CD4-positive, alpha-beta memory T cell (primary cell): ENCODE measurements at regions of chr1 and their contacts with region 1.

Region 1: GRCh38 chr1:101247404-101248287 is 10.8 kb downstream of the S1PR1 start:
- DNase-seq: no peak
- H3K4me3 ChIP-seq: no peak overlapping the region
- H3K4me3 Mint-ChIP-seq: peak overlapping the region in 3 of 8 donors; percentile 4 to 46 (median 36)
- H3K27ac ChIP-seq: no peak overlapping the region
- H3K27ac Mint-ChIP-seq: peak overlapping the region; percentile 20 to 79 (median 65)
- H3K4me1 ChIP-seq: peaks cover 55% of the 10 kb centered on the region
- H3K4me1 Mint-ChIP-seq: peaks cover 38 to 77% (median 57%) of the 10 kb centered on the region in 4 donors
- H3K27me3 ChIP-seq: no peaks in the 10 kb centered on the region
- H3K27me3 Mint-ChIP-seq: no peaks in the 10 kb centered on the region

Region 2: DNA sequence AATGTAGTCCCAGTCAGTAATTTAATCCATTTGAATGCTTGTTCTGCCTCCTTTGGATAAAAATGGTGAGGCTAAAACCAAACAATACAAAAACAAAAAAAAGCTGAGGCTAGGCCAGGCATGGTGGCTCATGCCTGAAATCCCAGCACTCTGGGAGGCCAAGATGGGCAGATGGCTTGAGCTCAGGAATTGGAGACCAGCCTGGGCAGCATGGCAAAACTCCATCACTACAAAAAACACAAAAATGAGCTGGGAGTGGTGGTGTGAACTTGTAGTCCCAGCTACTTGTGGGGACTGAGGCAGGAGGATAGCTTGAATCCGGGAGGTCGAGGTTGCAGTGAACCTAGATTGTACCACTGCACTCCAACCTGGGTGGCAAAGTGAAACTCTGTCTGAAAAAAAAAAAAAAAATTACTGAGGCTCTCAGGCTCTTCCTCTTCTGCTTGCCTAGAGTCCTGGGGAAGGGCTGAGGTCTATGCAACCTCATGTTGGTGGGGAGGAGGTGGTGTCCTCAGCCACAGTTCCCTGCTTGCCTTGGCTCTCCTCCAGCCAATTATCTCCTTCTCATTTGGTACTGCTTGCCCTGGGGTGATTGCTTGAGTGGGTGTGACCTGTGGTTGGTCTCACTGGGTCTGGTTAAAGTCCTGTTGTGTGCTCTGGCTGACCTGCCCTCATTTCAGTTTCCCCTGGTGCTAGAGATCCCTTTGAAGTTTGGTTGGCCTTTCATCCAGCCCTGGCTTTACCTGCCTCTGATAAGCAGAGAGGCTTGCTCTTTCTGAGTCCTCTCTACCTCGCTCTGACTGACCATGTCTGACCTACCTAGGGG is 10.1 kb after region 1 on chr1:
- CTCF ChIA-PET with region 1: interaction called, 6 read pairs
- POLR2A ChIA-PET with region 1: interaction called, 100 read pairs
- intact Hi-C with region 1: no loop called
- DNase-seq: peak; percentile 48 to 68 (median 56)
- H3K4me3 ChIP-seq: no peak overlapping the region
- H3K4me3 Mint-ChIP-seq: peak overlapping the region; percentile 26 to 78 (median 70)
- H3K27ac ChIP-seq: peak overlapping the region; percentile 8
- H3K27ac Mint-ChIP-seq: peak overlapping the region; percentile 73 to 92 (median 88)
- H3K4me1 ChIP-seq: peaks cover 58% of the 10 kb centered on the region
- H3K4me1 Mint-ChIP-seq: peaks cover 54 to 72% (median 65%) of the 10 kb centered on the region in 4 donors
- H3K27me3 ChIP-seq: no peaks in the 10 kb centered on the region
- H3K27me3 Mint-ChIP-seq: no peaks in the 10 kb centered on the region

Region 3: GRCh38 chr1:101262630-101263348 is 15.1 kb after region 1 on chr1:
- CTCF ChIA-PET with region 1: interaction called, 6 read pairs
- POLR2A ChIA-PET with region 1: interaction called, 79 read pairs
- intact Hi-C with region 1: no loop called
- DNase-seq: peak; percentile 52 to 65 (median 57)
- H3K4me3 ChIP-seq: peak overlapping the region in 1 of 2 donors; percentile 23
- H3K4me3 Mint-ChIP-seq: peak overlapping the region; percentile 76 to 88 (median 80)
- H3K27ac ChIP-seq: peak overlapping the region; percentile 41
- H3K27ac Mint-ChIP-seq: peak overlapping the region; percentile 62 to 93 (median 92)
- H3K4me1 ChIP-seq: peaks cover 99% of the 10 kb centered on the region
- H3K4me1 Mint-ChIP-seq: peaks cover 73 to 91% (median 81%) of the 10 kb centered on the region in 4 donors
- H3K27me3 ChIP-seq: no peaks in the 10 kb centered on the region
- H3K27me3 Mint-ChIP-seq: no peaks in the 10 kb centered on the region

Region 4: DNA sequence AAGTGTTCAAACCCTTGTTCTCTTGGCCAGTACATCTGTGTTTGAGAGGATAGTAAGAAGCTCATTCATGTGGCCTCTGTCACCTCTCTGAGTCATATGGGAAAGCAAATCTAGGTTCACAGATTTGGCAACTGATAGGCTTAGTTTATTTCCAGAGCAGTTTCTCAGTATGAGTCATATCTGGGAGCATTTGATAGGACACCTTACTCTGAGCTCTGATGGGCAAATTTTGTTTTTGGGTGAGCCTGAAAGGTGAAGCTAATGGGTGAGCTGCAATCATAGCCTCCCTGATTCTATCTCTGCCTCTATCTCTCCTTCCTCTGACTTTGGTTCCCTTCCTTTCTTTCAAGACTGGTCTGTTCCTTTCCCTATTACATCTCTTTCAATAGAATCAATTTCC is 123.6 kb after region 1 on chr1:
- CTCF ChIA-PET with region 1: no interaction called
- POLR2A ChIA-PET with region 1: no interaction called
- intact Hi-C with region 1: no loop called
- DNase-seq: peak in 2 of 5 donors; percentile 28 to 39
- H3K4me3 ChIP-seq: no peak overlapping the region
- H3K4me3 Mint-ChIP-seq: peak overlapping the region in 2 of 8 donors; percentile 26 to 38
- H3K27ac ChIP-seq: no peak overlapping the region
- H3K27ac Mint-ChIP-seq: peak overlapping the region in 3 of 7 donors; percentile 49 to 89 (median 75)
- H3K4me1 ChIP-seq: no peaks in the 10 kb centered on the region
- H3K4me1 Mint-ChIP-seq: peaks cover 0 to 12% (median 10%) of the 10 kb centered on the region in 4 donors
- H3K27me3 ChIP-seq: no peaks in the 10 kb centered on the region
- H3K27me3 Mint-ChIP-seq: no peaks in the 10 kb centered on the region